Naive thymus-derived CD4-positive, alpha-beta T cell (primary cell): ENCODE measurements at regions of chr7 and their contacts with region 1.

Region 1: GRCh38 chr7:143299840-143300239 is 11.7 kb downstream of the CASP2 start:
- DNase-seq: peak; percentile 39 to 73 (median 59)
- ATAC-seq: peak; percentile 93
- H3K4me3 ChIP-seq: no peak overlapping the region
- H3K4me3 Mint-ChIP-seq: peak overlapping the region in 3 of 10 donors; percentile 3 to 19 (median 15)
- H3K27ac ChIP-seq: no peak overlapping the region
- H3K27ac Mint-ChIP-seq: peak overlapping the region in 8 of 9 donors; percentile 12 to 84 (median 40)
- H3K4me1 ChIP-seq: peaks cover 7 to 10% of the 10 kb centered on the region in 2 donors
- H3K4me1 Mint-ChIP-seq: peaks cover 31 to 72% (median 44%) of the 10 kb centered on the region in 7 donors
- H3K27me3 ChIP-seq: no peaks in the 10 kb centered on the region
- H3K27me3 Mint-ChIP-seq: no peaks in the 10 kb centered on the region

Region 2: GRCh38 chr7:142248166-142249160 is 1051.4 kb before region 1 on chr7:
- CTCF ChIA-PET with region 1: no interaction called
- POLR2A ChIA-PET with region 1: no interaction called
- intact Hi-C with region 1: no loop called
- DNase-seq: no peak
- ATAC-seq: no peak
- H3K4me3 ChIP-seq: no peak overlapping the region
- H3K4me3 Mint-ChIP-seq: no peak overlapping the region
- H3K27ac ChIP-seq: no peak overlapping the region
- H3K27ac Mint-ChIP-seq: peak overlapping the region in 1 of 9 donors; percentile 80
- H3K4me1 ChIP-seq: no peaks in the 10 kb centered on the region
- H3K4me1 Mint-ChIP-seq: no peaks in the 10 kb centered on the region
- H3K27me3 ChIP-seq: no peaks in the 10 kb centered on the region
- H3K27me3 Mint-ChIP-seq: peaks cover 0 to 26% (median 12%) of the 10 kb centered on the region in 5 donors

Region 3: DNA sequence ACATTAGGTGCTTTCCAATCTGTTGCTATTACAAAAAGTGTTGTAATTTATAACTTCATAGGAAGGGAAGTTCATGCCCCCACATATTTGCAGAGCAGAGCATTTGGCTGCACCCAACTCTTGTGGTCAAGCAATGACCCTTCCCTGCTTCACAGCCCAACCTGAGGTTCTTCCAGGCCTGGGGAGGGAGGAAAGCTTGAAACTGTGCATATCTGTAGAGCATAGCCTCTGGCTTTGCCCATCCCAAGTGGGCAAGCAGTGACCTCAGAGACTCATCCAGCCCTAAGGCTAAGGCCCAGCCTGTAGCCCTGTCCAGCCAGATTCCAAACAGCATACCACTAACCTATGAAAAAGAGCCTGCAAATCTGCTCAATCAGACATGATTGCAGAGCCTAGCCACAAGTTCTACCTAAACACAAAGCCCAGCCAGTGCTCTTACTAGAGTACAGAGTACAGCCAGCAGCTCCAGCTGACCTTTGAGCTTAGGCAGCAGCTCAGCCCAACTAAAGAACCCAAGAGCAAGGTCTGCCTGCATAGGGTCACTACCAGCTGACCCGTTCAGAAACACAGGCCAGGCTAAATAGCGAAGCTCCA is 51.0 kb before region 1 on chr7:
- CTCF ChIA-PET with region 1: interaction called, 177 read pairs
- POLR2A ChIA-PET with region 1: interaction called, 7 read pairs
- intact Hi-C with region 1: no loop called
- DNase-seq: no peak
- ATAC-seq: no peak
- H3K4me3 ChIP-seq: peak overlapping the region; percentile 13
- H3K4me3 Mint-ChIP-seq: peak overlapping the region in 9 of 10 donors; percentile 12 to 68 (median 34)
- H3K27ac ChIP-seq: no peak overlapping the region
- H3K27ac Mint-ChIP-seq: peak overlapping the region; percentile 25 to 89 (median 80)
- H3K4me1 ChIP-seq: peaks cover 56 to 60% of the 10 kb centered on the region in 2 donors
- H3K4me1 Mint-ChIP-seq: peaks cover 60 to 99% (median 97%) of the 10 kb centered on the region in 7 donors
- H3K27me3 ChIP-seq: no peaks in the 10 kb centered on the region
- H3K27me3 Mint-ChIP-seq: no peaks in the 10 kb centered on the region

Region 4: DNA sequence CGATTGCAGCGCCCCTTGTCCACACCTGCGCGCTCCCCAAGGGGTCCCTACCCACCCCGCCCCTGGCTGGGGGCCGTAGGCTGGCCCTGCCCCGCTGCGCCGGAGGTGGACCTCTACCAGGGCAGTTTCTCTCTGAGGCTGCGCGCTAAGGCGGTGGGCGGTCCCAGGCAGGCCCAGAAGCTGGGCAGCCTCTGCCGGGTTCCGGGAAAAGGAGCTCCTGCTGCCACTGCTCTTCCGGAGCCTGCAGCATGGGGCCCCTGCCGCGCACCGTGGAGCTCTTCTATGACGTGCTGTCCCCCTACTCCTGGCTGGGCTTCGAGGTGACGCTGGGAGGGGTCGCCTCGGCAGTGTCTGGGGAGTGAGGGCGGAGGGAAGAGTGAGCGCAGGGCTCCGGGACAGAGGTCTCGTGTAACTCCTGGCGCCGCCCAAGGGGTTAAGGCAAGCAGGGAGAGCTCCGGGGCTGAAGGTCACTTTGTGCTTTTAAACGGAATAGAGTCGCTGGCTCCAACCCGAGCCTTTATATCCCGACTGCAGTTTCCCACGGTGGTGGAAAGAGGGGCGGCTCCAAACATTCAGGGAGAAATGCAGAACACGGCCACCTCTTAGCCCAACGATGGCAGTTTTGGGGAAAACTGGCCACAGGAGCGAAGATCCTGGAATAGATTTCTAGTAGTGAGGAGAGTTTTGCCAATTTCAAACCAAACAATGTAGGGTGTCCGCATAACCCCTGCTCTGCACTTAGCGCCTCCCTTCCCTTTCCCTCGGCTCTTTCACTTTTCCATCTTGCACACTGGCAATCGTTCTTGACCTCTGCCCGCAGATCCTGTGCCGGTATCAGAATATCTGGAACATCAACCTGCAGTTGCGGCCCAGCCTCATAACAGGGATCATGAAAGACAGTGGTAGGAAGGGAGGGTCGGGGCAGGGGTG is 36.3 kb before region 1 on chr7 and contains the start of gene GSTK1:
- CTCF ChIA-PET with region 1: interaction called, 15 read pairs
- POLR2A ChIA-PET with region 1: interaction called, 9 read pairs
- intact Hi-C with region 1: no loop called
- DNase-seq: peak; percentile 62 to 86 (median 74)
- ATAC-seq: peak; percentile 97
- H3K4me3 ChIP-seq: peak within 1 kb of the TSS; percentile 90
- H3K4me3 Mint-ChIP-seq: peak within 1 kb of the TSS; percentile 93 to 99 (median 97)
- H3K27ac ChIP-seq: peak within 1 kb of the TSS; percentile 84
- H3K27ac Mint-ChIP-seq: peak within 1 kb of the TSS; percentile 76 to 99 (median 97)
- H3K4me1 ChIP-seq: peaks cover 34 to 40% of the 10 kb centered on the region in 2 donors
- H3K4me1 Mint-ChIP-seq: peaks cover 39 to 88% (median 66%) of the 10 kb centered on the region in 7 donors
- H3K27me3 ChIP-seq: no peaks in the 10 kb centered on the region
- H3K27me3 Mint-ChIP-seq: no peaks in the 10 kb centered on the region
- total RNA-seq, gene GSTK1: 253 to 385 (median 311) TPM

Region 5: GRCh38 chr7:143279186-143280098 is 20.4 kb before region 1 on chr7:
- CTCF ChIA-PET with region 1: interaction called, 18 read pairs
- POLR2A ChIA-PET with region 1: interaction called, 8 read pairs
- intact Hi-C with region 1: no loop called
- DNase-seq: peak in 6 of 9 donors; percentile 32 to 57 (median 40)
- ATAC-seq: peak; percentile 83
- H3K4me3 ChIP-seq: peak overlapping the region; percentile 42
- H3K4me3 Mint-ChIP-seq: peak overlapping the region; percentile 29 to 85 (median 75)
- H3K27ac ChIP-seq: peak overlapping the region; percentile 59
- H3K27ac Mint-ChIP-seq: peak overlapping the region; percentile 46 to 94 (median 85)
- H3K4me1 ChIP-seq: peaks cover 5 to 31% of the 10 kb centered on the region in 2 donors
- H3K4me1 Mint-ChIP-seq: peaks cover 19 to 42% (median 38%) of the 10 kb centered on the region in 7 donors
- H3K27me3 ChIP-seq: no peaks in the 10 kb centered on the region
- H3K27me3 Mint-ChIP-seq: no peaks in the 10 kb centered on the region

Region 6: DNA sequence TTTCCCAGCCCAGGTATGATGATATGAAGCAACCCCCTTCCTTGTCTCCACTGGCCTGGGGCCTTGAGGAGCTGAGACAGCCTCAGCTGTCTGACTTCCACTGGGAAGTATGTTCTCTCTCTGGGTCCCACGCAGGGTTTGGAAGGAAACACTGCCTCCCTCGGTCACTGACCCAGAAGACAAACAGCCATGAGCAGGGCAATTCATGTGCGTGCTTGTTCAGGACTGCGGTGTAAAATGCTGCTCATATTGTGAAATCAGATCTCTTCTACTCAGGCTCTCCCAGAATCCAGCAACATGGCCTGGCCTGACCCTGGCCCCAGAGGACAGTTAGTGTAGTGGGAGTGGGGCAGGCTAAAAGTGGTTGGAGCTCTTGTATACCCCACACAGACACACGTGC is 18.8 kb after region 1 on chr7:
- CTCF ChIA-PET with region 1: no interaction called
- POLR2A ChIA-PET with region 1: no interaction called
- intact Hi-C with region 1: no loop called
- DNase-seq: no peak
- ATAC-seq: no peak
- H3K4me3 ChIP-seq: no peak overlapping the region
- H3K4me3 Mint-ChIP-seq: no peak overlapping the region
- H3K27ac ChIP-seq: no peak overlapping the region
- H3K27ac Mint-ChIP-seq: peak overlapping the region in 1 of 9 donors; percentile 4
- H3K4me1 ChIP-seq: no peaks in the 10 kb centered on the region
- H3K4me1 Mint-ChIP-seq: peaks cover 0 to 15% (median 0%) of the 10 kb centered on the region in 7 donors
- H3K27me3 ChIP-seq: no peaks in the 10 kb centered on the region
- H3K27me3 Mint-ChIP-seq: peaks cover 0 to 19% (median 0%) of the 10 kb centered on the region in 5 donors

Region 7: DNA sequence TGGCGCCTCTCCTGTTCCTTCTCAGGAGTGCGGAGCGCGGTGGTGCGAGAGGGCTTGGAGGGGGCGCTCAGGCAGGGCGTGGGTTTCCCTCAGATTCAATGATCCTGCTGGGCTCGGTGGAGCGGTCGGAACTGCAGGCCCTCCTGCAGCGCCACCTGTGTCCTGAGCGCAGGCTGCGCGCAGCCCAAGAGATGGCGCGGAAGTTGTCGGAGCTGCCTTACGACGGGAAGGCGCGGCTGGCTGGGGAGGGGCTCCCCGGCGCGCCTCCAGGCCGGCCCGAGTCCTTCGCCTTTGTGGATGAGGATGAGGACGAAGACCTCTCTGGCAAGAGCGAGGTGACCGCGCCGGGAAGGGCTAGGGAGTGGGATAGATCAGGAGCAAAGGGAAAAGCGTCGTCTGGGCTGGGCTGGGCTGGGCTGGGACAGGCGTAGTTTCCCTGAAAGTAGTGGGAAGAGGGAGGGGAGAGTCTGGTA is 45.6 kb after region 1 on chr7:
- CTCF ChIA-PET with region 1: interaction called, 5 read pairs
- POLR2A ChIA-PET with region 1: no interaction called
- intact Hi-C with region 1: loop called in 1 of 2 experiments (anchors 2 kb)
- DNase-seq: peak; percentile 31 to 62 (median 56)
- ATAC-seq: peak; percentile 98
- H3K4me3 ChIP-seq: peak overlapping the region; percentile 29
- H3K4me3 Mint-ChIP-seq: peak overlapping the region; percentile 56 to 87 (median 76)
- H3K27ac ChIP-seq: no peak overlapping the region
- H3K27ac Mint-ChIP-seq: peak overlapping the region in 3 of 9 donors; percentile 3 to 79 (median 56)
- H3K4me1 ChIP-seq: peaks cover 0 to 4% of the 10 kb centered on the region in 2 donors
- H3K4me1 Mint-ChIP-seq: peaks cover 5 to 13% (median 9%) of the 10 kb centered on the region in 7 donors
- H3K27me3 ChIP-seq: no peaks in the 10 kb centered on the region
- H3K27me3 Mint-ChIP-seq: peaks cover 0 to 57% (median 2%) of the 10 kb centered on the region in 5 donors

Region 8: DNA sequence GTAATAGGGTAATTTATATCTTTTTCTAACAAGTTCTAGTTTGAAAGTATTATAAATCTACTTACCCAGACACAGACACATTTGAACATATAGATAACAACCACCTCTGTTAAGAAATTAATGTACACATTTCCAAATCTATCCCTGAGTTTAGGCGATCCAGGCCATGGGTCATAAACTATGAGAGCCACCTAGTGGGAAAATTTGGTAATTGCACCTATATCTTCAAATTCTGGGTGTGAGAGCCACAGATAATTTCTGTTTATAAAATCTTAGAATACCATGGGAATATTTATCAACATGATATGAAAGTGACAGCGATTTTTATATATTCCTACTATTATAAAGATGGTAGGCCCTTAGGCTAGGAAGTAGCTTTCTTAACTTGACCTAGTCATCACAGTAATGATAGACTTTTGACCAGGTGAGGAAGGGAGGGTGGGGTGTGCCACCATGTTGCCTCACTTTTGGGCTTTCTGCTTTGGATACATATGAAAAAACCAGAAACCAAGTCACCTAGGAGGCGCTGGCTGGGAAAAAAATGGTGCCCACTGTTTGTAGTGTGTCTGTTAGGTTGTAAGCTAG is 116.8 kb after region 1 on chr7:
- CTCF ChIA-PET with region 1: interaction called, 14 read pairs
- POLR2A ChIA-PET with region 1: interaction called, 3 read pairs
- intact Hi-C with region 1: loop called (anchors 1 to 5 kb)
- DNase-seq: peak in 6 of 9 donors; percentile 34 to 58 (median 52)
- ATAC-seq: peak; percentile 74
- H3K4me3 ChIP-seq: no peak overlapping the region
- H3K4me3 Mint-ChIP-seq: no peak overlapping the region
- H3K27ac ChIP-seq: no peak overlapping the region
- H3K27ac Mint-ChIP-seq: no peak overlapping the region
- H3K4me1 ChIP-seq: peaks cover 0 to 3% of the 10 kb centered on the region in 2 donors
- H3K4me1 Mint-ChIP-seq: peaks cover 2 to 56% (median 46%) of the 10 kb centered on the region in 7 donors
- H3K27me3 ChIP-seq: no peaks in the 10 kb centered on the region
- H3K27me3 Mint-ChIP-seq: peaks cover 0 to 21% (median 0%) of the 10 kb centered on the region in 5 donors